RWPE1 (cell line): ENCODE measurements at regions of chr5 and their contacts with region 1.

Region 1: DNA sequence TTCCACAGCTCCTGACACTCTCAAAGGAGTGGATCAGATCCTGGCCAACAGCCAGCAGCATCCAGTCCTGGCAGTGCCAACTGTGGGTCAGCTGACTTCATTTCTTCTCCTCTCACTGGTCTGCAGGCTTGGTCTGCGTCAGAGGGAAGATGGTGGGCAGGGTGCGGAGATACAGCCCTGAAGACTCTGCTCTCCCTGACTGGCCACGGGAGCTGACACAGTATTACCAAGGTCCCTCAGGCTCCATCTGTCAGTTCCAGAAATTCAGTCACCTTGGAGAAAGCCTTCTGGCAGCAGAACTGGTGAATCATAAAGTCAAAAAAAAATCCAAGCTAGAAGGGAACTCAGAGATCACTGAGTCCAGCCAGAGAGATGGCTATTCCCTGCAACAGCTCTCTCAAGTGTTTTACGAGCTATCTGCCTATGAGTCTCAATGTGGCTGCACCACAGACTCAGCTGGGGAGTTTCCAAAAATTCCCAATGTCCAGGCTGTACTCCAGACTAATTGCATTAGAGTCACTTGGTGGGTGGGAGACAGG is 28.0 kb downstream of the C1QTNF2 start:
- DNase-seq: peak; percentile 22
- H3K27ac ChIP-seq: no peak overlapping the region
- CTCF ChIP-seq: no peak

Region 2: DNA sequence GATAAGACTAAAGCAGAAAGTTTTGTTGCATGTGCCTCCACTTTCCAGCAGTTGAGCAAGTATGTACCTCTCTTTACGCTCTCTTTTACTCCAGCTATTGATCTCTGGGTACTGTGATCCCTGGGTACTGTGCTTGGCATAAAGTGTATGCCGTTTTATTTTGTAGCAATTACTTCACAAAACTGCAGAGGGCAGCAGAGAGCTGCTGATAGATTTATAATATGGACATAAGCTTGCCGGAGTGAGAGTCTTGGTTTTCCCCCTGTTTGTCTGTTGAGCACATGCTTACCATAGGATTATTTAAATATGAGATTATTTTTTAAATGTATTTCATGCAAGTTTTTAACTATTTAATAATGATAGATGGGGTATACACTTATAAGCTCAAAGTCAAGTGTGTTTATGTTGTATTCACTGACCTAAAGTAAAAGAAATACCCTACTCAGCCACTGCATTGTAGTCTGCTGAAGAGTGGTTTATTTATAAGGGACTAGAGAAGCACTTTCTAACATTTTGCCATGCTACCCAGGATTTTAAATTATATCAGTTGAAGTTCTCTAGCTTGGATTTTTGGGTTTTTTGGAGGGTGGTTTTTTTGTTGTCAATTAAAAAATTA is 320.5 kb before region 1 on chr5:
- CTCF ChIA-PET with region 1: interaction called, 31 read pairs
- POLR2A ChIA-PET with region 1: no interaction called
- DNase-seq: peak; percentile 71
- H3K27ac ChIP-seq: no peak overlapping the region
- CTCF ChIP-seq: peak; percentile 93

Region 3: GRCh38 chr5:160159991-160160792 is 182.3 kb before region 1 on chr5:
- CTCF ChIA-PET with region 1: interaction called, 10 read pairs
- POLR2A ChIA-PET with region 1: no interaction called
- DNase-seq: no peak
- H3K27ac ChIP-seq: no peak overlapping the region
- CTCF ChIP-seq: no peak

Region 4: GRCh38 chr5:160199410-160199911 is 143.0 kb before region 1 on chr5:
- CTCF ChIA-PET with region 1: interaction called, 13 read pairs
- POLR2A ChIA-PET with region 1: no interaction called
- DNase-seq: peak; percentile 86
- H3K27ac ChIP-seq: no peak overlapping the region
- CTCF ChIP-seq: peak; percentile 99

Region 5: GRCh38 chr5:160209963-160210374 is 132.5 kb before region 1 on chr5:
- CTCF ChIA-PET with region 1: interaction called, 12 read pairs
- POLR2A ChIA-PET with region 1: no interaction called
- DNase-seq: peak; percentile 86
- H3K27ac ChIP-seq: no peak overlapping the region
- CTCF ChIP-seq: no peak

Region 6: GRCh38 chr5:160260006-160260775 is 82.3 kb before region 1 on chr5:
- CTCF ChIA-PET with region 1: interaction called, 10 read pairs
- POLR2A ChIA-PET with region 1: no interaction called
- DNase-seq: no peak
- H3K27ac ChIP-seq: no peak overlapping the region
- CTCF ChIP-seq: no peak

Region 7: DNA sequence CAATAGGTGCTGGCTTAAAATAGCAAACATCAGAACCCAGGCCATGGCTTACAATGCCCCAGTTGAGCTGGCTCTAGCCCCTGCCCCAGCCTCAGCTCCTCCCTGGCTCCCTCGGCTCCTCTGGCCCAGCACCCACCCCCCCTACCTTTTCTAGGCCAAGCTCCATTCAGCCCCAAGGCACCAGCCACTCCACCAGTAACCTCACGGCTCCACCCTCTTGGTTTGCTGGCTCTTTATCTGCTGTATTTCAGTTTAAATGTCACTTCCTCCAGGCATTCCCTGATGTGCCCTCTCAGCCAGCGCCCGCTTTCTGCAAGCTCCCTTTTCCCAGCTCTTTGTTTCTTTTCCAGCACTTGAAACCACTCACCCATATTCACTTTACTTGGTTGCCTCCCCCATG is 17.3 kb after region 1 on chr5:
- CTCF ChIA-PET with region 1: interaction called, 13 read pairs
- POLR2A ChIA-PET with region 1: no interaction called
- DNase-seq: no peak
- H3K27ac ChIP-seq: peak overlapping the region; percentile 7; the same call in 1 of the 2 replicates
- CTCF ChIP-seq: no peak

Region 8: DNA sequence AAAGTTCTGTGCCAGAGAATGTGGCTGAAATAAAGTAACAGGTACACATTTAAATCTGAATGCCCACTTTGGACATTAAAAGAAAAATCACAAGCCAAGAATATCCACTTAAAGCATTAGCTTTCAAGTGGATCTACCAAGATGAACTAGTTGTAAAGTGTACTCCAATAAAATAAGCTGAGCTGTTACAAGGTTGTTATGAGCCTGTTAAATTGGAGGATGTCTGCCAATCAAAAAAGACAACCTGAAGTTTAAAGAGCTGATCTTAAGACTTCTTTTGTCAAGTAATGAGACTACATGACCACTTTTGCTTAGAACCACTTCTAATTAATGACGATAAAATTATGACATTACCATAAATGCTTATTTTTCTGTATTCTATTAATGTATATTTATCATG is 55.0 kb after region 1 on chr5:
- CTCF ChIA-PET with region 1: no interaction called
- POLR2A ChIA-PET with region 1: no interaction called
- DNase-seq: no peak
- H3K27ac ChIP-seq: no peak overlapping the region
- CTCF ChIP-seq: no peak

Region 9: GRCh38 chr5:160467555-160468362 is 125.3 kb after region 1 on chr5:
- CTCF ChIA-PET with region 1: no interaction called
- POLR2A ChIA-PET with region 1: no interaction called
- DNase-seq: no peak
- H3K27ac ChIP-seq: no peak overlapping the region
- CTCF ChIP-seq: no peak

Region 10: DNA sequence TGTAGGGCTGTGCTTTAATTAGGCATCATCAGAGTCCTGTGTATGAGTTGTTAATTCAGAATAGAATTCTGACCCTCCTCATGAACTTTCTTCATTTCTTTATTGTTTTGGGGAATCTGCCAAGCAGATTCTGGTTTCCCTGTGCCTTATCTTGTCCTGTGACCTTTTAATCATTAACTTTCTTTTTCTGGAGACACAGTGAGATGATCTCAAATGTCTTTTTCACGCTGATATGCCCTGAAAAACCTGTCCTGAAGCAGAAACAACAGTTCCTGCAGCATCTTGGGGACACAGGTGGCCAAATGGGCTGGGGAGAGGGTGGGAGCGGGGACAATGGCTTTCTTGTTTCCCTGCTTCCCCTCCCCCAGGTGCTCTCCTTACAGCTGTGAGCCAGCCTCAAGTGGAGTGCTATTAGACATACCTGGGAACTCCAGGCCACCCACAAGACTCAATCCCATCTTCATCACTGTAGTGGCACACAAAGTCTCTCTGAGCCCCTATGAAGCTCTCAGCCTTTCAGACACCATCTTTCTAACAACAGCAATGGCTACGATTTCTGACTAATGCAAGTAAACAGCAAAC is 295.8 kb after region 1 on chr5:
- CTCF ChIA-PET with region 1: no interaction called
- POLR2A ChIA-PET with region 1: no interaction called
- DNase-seq: no peak
- H3K27ac ChIP-seq: no peak overlapping the region
- CTCF ChIP-seq: no peak

Region 11: GRCh38 chr5:161022151-161022550 is 679.7 kb after region 1 on chr5:
- CTCF ChIA-PET with region 1: no interaction called
- POLR2A ChIA-PET with region 1: no interaction called
- DNase-seq: no peak
- H3K27ac ChIP-seq: no peak overlapping the region
- CTCF ChIP-seq: no peak